ENCODE measurements at regions of chrX and their contacts with region 1.

Region 1: DNA sequence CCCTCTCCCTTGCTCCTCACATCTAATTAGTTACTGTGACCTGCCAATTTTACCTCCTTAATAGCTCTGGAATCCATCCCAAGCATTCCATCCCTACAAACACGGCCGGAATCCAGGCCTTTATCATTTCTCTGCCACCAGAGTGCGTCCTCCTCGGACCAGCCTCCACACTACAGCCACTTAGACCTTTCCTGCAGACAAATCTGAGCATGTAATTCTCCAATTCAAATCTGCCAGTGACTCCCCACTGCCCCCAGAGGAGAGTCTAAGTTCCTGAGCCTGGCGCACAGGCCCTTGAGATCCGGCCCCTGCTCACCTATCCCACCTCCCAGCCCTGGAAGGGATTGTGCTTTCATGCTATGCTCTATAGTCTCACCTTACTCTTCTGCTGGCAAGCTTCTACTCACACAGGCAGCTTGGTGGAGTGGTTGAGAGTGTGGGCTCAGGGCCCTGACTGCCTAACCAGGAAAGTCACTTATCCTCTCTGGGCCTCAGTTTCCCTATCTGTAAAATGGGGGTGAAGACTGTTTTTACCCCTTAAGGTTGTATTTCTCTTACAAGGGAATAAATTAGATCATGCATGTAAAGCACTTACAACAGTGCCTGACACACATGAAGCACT is 31.2 kb downstream of the PJA1 start:
- DNase-seq: peak in 1 of 5 donors; percentile 24
- ATAC-seq: peak in 3 of 4 donors; percentile 16 to 59 (median 39)
- H3K4me3 ChIP-seq: no peak overlapping the region
- H3K27ac ChIP-seq: no peak overlapping the region
- H3K4me1 ChIP-seq: peaks cover 0 to 12% (median 0%) of the 10 kb centered on the region in 12 donors
- H3K27me3 ChIP-seq: peaks cover 0 to 50% (median 0%) of the 10 kb centered on the region in 9 donors
- CTCF ChIP-seq: peak in 10 of 12 donors; percentile 12 to 54 (median 33)
- POLR2A ChIP-seq: no peak

Region 2: GRCh38 chrX:68989865-68990606 is 144.0 kb before region 1 on chrX:
- intact Hi-C with region 1: no loop called
- DNase-seq: peak; percentile 41 to 63 (median 48)
- ATAC-seq: peak; percentile 72 to 87 (median 80)
- H3K4me3 ChIP-seq: no peak overlapping the region
- H3K27ac ChIP-seq: peak overlapping the region in 7 of 12 donors; percentile 20 to 57 (median 33)
- H3K4me1 ChIP-seq: peaks cover 0 to 34% (median 12%) of the 10 kb centered on the region in 12 donors
- H3K27me3 ChIP-seq: peaks cover 0 to 11% (median 0%) of the 10 kb centered on the region in 9 donors
- CTCF ChIP-seq: no peak
- POLR2A ChIP-seq: no peak

Region 3: GRCh38 chrX:69070949-69071650 is 62.9 kb before region 1 on chrX:
- intact Hi-C with region 1: loop called in 1 of 10 experiments (anchors 10 kb)
- DNase-seq: peak; percentile 69 to 84 (median 79)
- ATAC-seq: peak; percentile 85 to 92 (median 88)
- H3K4me3 ChIP-seq: no peak overlapping the region
- H3K27ac ChIP-seq: peak overlapping the region in 4 of 12 donors; percentile 8 to 42 (median 22)
- H3K4me1 ChIP-seq: peaks cover 0 to 16% (median 0%) of the 10 kb centered on the region in 12 donors
- H3K27me3 ChIP-seq: peaks cover 0 to 3% (median 0%) of the 10 kb centered on the region in 9 donors
- CTCF ChIP-seq: no peak
- POLR2A ChIP-seq: no peak

Measured in heart left ventricle (tissue), 16 donors.